ENCODE measurements at regions of chr2 and their contacts with region 1.

Region 1: DNA sequence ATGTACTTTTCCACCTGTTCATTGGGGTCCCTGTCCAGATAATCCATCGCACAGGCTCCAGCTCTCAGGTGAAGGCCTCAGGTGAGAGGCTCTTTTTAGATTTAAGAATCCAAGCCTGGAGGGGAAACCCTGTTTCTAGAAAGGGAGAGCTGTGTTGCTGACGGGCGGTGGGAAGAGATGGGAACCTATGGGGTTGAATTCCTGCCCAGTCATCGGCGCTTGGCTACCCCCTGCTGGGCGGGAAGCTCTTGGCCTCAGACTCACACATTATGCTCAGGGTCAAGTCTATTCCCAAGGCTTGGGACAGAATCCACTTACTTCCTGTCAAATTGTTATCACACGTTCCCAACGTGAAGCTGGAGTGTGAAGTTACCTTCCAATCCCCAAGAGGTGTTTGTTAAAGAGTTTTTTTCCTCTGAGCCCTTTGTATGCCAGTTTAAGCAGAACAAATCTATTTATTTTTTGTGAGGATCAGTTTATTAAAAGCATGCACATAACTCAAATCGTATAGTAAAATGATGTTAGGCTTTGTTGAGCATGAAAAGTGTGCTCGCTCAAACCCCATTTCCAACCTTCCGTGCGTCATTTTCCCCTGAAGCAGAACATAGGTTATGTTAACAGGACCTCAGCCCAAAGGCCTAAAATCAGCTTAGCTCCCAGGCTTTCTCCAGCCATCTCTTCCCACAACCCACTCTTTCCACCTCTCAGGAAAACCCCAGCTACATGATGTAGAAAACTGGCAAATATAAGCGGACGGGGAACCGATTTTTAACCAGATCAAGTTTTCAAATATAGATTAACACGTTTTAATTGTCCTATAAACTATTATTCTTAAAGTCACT is 181.7 kb upstream of the ETAA1 start:
- DNase-seq: peak; percentile 82
- H3K4me3 Mint-ChIP-seq: no peak overlapping the region
- H3K27ac Mint-ChIP-seq: peak overlapping the region; percentile 32
- H3K4me1 Mint-ChIP-seq: peaks cover 30% of the 10 kb centered on the region
- H3K27me3 Mint-ChIP-seq: no peaks in the 10 kb centered on the region
- CTCF ChIP-seq: peak; percentile 74

Region 2: GRCh38 chr2:66434679-66435548 is 780.5 kb before region 1 on chr2 and contains the start of gene MEIS1:
- CTCF ChIA-PET with region 1: no interaction called
- intact Hi-C with region 1: loop called (anchors 5 kb)
- DNase-seq: peak; percentile 89
- H3K4me3 Mint-ChIP-seq: peak within 1 kb of the TSS; percentile 74
- H3K27ac Mint-ChIP-seq: peak within 1 kb of the TSS; percentile 75
- H3K4me1 Mint-ChIP-seq: peaks cover 19% of the 10 kb centered on the region
- H3K27me3 Mint-ChIP-seq: no peaks in the 10 kb centered on the region
- CTCF ChIP-seq: no peak
- total RNA-seq, gene MEIS1: 8.1 and 11.5 TPM in 2 replicates

Region 3: GRCh38 chr2:66699793-66700676 is 515.4 kb before region 1 on chr2:
- CTCF ChIA-PET with region 1: no interaction called
- intact Hi-C with region 1: loop called (anchors 10 kb)
- DNase-seq: peak; percentile 28
- H3K4me3 Mint-ChIP-seq: peak overlapping the region; percentile 28
- H3K27ac Mint-ChIP-seq: peak overlapping the region; percentile 57
- H3K4me1 Mint-ChIP-seq: peaks cover 23% of the 10 kb centered on the region
- H3K27me3 Mint-ChIP-seq: no peaks in the 10 kb centered on the region
- CTCF ChIP-seq: no peak

Region 4: DNA sequence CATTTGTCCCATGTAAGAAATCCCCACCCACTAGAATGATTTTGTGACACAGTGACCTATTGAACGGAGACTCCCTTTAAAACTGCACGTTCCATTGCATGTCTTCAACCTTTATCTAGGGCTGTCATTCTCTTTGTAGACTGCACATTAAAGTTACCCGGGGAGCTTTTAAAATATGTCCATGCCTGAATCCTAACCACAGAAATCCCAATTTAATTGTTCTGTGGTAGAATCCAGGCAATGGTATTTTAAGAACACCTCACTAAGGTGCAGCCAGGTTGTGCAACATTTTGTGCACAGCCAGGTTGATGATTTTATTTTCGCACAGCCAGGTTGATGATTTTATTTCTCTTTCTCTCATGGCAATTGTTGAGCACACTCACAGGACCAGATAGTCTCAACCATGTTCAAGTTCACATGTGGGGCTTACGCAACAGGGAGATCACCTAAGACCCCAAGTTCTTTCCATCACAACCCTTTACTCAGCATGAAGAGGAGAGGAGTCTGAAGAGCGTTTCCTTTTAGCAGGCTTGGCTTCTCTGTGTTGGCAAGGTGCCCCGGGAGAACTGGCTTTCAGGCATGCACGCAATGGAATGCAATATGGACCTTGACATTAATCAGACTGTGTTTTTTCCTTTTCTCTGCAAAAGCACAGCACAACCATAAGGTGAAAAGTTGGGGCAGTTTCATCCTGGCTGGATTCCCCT is 285.6 kb before region 1 on chr2:
- CTCF ChIA-PET with region 1: no interaction called
- intact Hi-C with region 1: loop called (anchors 10 kb)
- DNase-seq: peak; percentile 82
- H3K4me3 Mint-ChIP-seq: peak overlapping the region; percentile 52
- H3K27ac Mint-ChIP-seq: peak overlapping the region; percentile 84
- H3K4me1 Mint-ChIP-seq: peaks cover 37% of the 10 kb centered on the region
- H3K27me3 Mint-ChIP-seq: no peaks in the 10 kb centered on the region
- CTCF ChIP-seq: no peak

Region 5: DNA sequence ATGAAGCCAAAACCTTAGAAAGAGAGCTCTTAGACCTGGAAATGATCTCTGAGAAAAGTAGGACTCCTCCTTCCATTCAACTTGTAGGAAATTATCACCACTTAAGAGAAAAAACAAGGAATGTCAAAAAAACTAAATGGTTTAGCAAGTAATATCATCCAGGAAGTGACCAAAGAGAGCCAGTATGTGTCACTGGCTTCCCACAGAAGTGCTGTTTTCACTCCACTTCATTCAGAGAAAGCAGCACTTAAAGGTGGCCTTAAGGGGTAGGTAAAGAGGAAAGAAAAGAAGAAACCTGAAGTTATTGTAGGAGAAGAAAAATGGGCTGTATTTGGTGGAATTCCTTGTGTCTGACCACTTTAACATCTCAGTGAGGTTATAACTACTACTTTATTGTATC is 232.7 kb before region 1 on chr2:
- CTCF ChIA-PET with region 1: no interaction called
- intact Hi-C with region 1: loop called (anchors 2 kb)
- DNase-seq: no peak
- H3K4me3 Mint-ChIP-seq: no peak overlapping the region
- H3K27ac Mint-ChIP-seq: no peak overlapping the region
- H3K4me1 Mint-ChIP-seq: no peaks in the 10 kb centered on the region
- H3K27me3 Mint-ChIP-seq: no peaks in the 10 kb centered on the region
- CTCF ChIP-seq: no peak

Region 6: GRCh38 chr2:67048314-67048713 is 167.1 kb before region 1 on chr2:
- CTCF ChIA-PET with region 1: no interaction called
- intact Hi-C with region 1: loop called (anchors 10 kb)
- DNase-seq: no peak
- H3K4me3 Mint-ChIP-seq: no peak overlapping the region
- H3K27ac Mint-ChIP-seq: no peak overlapping the region
- H3K4me1 Mint-ChIP-seq: peaks cover 26% of the 10 kb centered on the region
- H3K27me3 Mint-ChIP-seq: no peaks in the 10 kb centered on the region
- CTCF ChIP-seq: no peak

Region 7: GRCh38 chr2:67070826-67071225 is 144.6 kb before region 1 on chr2:
- CTCF ChIA-PET with region 1: no interaction called
- intact Hi-C with region 1: no loop called
- DNase-seq: no peak
- H3K4me3 Mint-ChIP-seq: no peak overlapping the region
- H3K27ac Mint-ChIP-seq: no peak overlapping the region
- H3K4me1 Mint-ChIP-seq: no peaks in the 10 kb centered on the region
- H3K27me3 Mint-ChIP-seq: peaks cover 18% of the 10 kb centered on the region
- CTCF ChIP-seq: no peak